Dorsolateral prefrontal cortex (tissue), 120 donors: ENCODE measurements at regions of chr20 and their contacts with region 1.

Region 1: GRCh38 chr20:37192137-37192854 is 12.9 kb upstream of the MROH8 start:
- DNase-seq: peak; percentile 86 to 97 (median 93)
- H3K4me3 ChIP-seq: peak overlapping the region in 13 of 59 donors; percentile 4 to 43 (median 10)
- H3K27ac ChIP-seq: peak overlapping the region in 52 of 59 donors; percentile 8 to 88 (median 62)
- H3K27me3 ChIP-seq: no peaks in the 10 kb centered on the region
- CTCF ChIP-seq: peak; percentile 88 to 99 (median 96)

Region 2: GRCh38 chr20:37095599-37096414 is 96.5 kb before region 1 on chr20 and contains the start of gene RBL1:
- intact Hi-C with region 1: loop called in 1 of 2 experiments (anchors 5 kb)
- DNase-seq: peak; percentile 77 to 91 (median 85)
- H3K4me3 ChIP-seq: peak within 1 kb of the TSS; percentile 70 to 100 (median 92)
- H3K27ac ChIP-seq: peak within 1 kb of the TSS in 56 of 59 donors; percentile 1 to 89 (median 70)
- H3K27me3 ChIP-seq: no peaks in the 10 kb centered on the region
- CTCF ChIP-seq: peak; percentile 25 to 83 (median 60)
- total RNA-seq, gene RBL1: 3.8 to 16.4 (median 7.5) TPM

Region 3: GRCh38 chr20:37384683-37385174 is 192.4 kb after region 1 on chr20:
- intact Hi-C with region 1: loop called (anchors 5 to 10 kb)
- DNase-seq: peak in 6 of 10 donors; percentile 36 to 83 (median 60)
- H3K4me3 ChIP-seq: peak overlapping the region in 58 of 59 donors; percentile 19 to 66 (median 51)
- H3K27ac ChIP-seq: peak overlapping the region in 9 of 59 donors; percentile 1 to 68 (median 43)
- H3K27me3 ChIP-seq: no peaks in the 10 kb centered on the region
- CTCF ChIP-seq: peak; percentile 69 to 96 (median 88)

Region 4: DNA sequence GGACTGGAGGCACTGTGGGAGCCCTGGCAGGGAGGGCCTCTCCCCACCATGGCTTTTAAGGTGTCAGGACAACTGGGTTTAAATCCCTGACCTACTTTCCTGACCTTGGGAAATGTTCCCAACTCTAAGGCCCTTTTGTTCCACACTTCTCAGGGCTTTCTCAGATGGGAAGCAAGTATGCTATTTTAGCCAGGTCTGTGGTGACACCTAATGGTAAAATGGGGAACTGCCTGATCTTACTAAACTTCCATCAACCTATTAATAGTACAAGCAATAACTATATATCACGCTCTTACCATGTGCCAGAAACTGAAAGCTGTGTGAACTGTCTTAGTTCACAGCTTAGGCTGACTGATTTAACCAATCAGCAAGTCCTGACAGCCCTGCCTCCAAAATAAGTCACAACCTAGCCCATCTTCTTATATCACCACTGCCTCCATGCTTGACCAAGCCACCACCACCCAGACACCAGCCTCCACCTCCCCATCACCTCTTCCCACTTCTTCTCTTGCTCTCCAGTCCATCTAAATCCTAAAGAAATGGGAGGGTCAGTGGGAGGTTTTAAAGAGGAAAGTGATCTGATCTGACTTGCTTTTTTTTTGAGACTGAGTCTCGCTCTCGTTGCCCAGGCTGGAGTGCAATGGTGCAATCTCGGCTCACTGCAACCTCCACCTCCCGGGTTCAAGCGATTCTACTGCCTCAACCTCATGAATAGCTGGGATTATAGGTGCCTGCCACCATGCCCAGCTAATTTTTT is 342.3 kb after region 1 on chr20:
- intact Hi-C with region 1: loop called (anchors 2 kb)
- DNase-seq: peak in 3 of 10 donors; percentile 14 to 63 (median 48)
- H3K4me3 ChIP-seq: no peak overlapping the region
- H3K27ac ChIP-seq: peak overlapping the region in 1 of 59 donors; percentile 11
- H3K27me3 ChIP-seq: no peaks in the 10 kb centered on the region
- CTCF ChIP-seq: peak; percentile 84 to 98 (median 92)

Region 5: DNA sequence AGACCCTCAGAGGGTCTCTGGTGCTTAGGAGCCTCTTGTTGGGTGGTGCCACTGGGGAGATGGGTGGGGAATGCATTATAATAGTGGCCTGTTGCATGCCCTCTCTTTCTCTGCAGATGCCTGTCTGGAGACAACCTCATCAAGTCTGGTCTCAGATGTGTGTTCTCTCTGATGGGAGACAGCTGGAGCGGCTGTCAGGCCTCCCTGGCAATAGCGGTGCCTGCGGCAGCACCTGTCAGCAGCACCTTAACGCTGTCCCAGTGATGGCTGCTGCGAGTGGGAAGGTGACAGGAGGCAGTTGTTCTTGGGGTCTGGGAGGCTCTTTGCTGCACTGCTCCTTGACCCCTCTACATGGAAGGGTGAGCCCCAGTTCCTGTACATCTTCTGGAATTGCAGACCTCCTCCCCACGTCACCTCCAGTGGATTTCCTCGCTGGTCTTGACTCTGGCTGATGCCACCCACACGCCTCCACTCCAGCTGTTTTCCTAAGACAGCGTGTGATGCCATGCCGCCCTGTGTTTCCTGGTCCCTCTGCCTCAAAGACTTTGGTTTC is 398.7 kb after region 1 on chr20:
- intact Hi-C with region 1: no loop called
- DNase-seq: no peak
- H3K4me3 ChIP-seq: no peak overlapping the region
- H3K27ac ChIP-seq: no peak overlapping the region
- H3K27me3 ChIP-seq: peaks cover 0 to 14% (median 0%) of the 10 kb centered on the region in 45 donors
- CTCF ChIP-seq: no peak

Region 6: GRCh38 chr20:37990571-37991151 is 798.4 kb after region 1 on chr20:
- intact Hi-C with region 1: loop called in 1 of 2 experiments (anchors 10 kb)
- DNase-seq: peak in 2 of 10 donors; percentile 37 to 67
- H3K4me3 ChIP-seq: no peak overlapping the region
- H3K27ac ChIP-seq: peak overlapping the region in 54 of 59 donors; percentile 12 to 90 (median 71)
- H3K27me3 ChIP-seq: no peaks in the 10 kb centered on the region
- CTCF ChIP-seq: no peak